Right cardiac atrium (tissue), 5 donors: ENCODE measurements at regions of chr11 and their contacts with region 1.

Region 1: DNA sequence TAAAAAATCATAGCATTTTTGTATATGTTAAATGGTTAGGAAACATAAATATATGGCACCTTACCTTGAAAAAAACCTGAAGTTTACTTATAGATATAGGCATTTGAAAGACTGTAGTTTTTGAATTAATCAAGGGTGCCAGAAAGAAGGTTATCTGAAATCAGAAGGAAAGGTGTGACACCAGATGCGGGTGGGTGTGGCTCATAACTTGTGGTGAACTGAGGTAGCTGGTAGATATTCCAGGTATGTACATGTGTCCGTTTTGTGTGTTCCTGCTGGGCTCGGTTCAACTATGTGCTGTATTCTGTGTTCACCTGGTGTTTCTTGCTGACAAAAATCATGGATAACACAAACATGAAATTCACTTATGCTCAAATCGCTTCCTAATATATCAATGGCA is 35.6 kb downstream of the STK33 start:
- DNase-seq: no peak
- ATAC-seq: no peak
- H3K4me3 ChIP-seq: no peak overlapping the region
- H3K27ac ChIP-seq: no peak overlapping the region
- H3K4me1 ChIP-seq: no peaks in the 10 kb centered on the region
- H3K27me3 ChIP-seq: no peaks in the 10 kb centered on the region

Region 2: GRCh38 chr11:8338138-8338537 is 220.3 kb before region 1 on chr11:
- intact Hi-C with region 1: loop called in 3 of 4 experiments (anchors 10 kb)
- DNase-seq: peak in 2 of 3 donors; percentile 72 to 73
- ATAC-seq: peak; percentile 39 to 49
- H3K4me3 ChIP-seq: no peak overlapping the region
- H3K27ac ChIP-seq: no peak overlapping the region
- H3K4me1 ChIP-seq: no peaks in the 10 kb centered on the region
- H3K27me3 ChIP-seq: no peaks in the 10 kb centered on the region

Region 3: GRCh38 chr11:8638300-8638699 is 79.9 kb after region 1 on chr11:
- intact Hi-C with region 1: no loop called
- DNase-seq: no peak
- ATAC-seq: no peak
- H3K4me3 ChIP-seq: no peak overlapping the region
- H3K27ac ChIP-seq: no peak overlapping the region
- H3K4me1 ChIP-seq: no peaks in the 10 kb centered on the region
- H3K27me3 ChIP-seq: no peaks in the 10 kb centered on the region

Region 4: GRCh38 chr11:8911029-8911826 is 352.8 kb after region 1 on chr11 and contains the start of gene AKIP1:
- intact Hi-C with region 1: no loop called
- DNase-seq: peak; percentile 98 to 99 (median 99)
- ATAC-seq: peak; percentile 98
- H3K4me3 ChIP-seq: peak within 1 kb of the TSS; percentile 66
- H3K27ac ChIP-seq: peak within 1 kb of the TSS; percentile 92
- H3K4me1 ChIP-seq: no peaks in the 10 kb centered on the region
- H3K27me3 ChIP-seq: no peaks in the 10 kb centered on the region
- total RNA-seq, gene AKIP1: 24.4 to 30.3 (median 25.4) TPM